ENCODE measurements at regions of chr1 and their contacts with region 1.

Region 1: GRCh38 chr1:89605692-89606091 is 27.2 kb upstream of the LRRC8C start:
- DNase-seq: no peak
- H3K4me3 Mint-ChIP-seq: peak overlapping the region; percentile 43
- H3K27ac Mint-ChIP-seq: peak overlapping the region; percentile 100
- H3K4me1 Mint-ChIP-seq: peaks cover 98% of the 10 kb centered on the region
- H3K27me3 Mint-ChIP-seq: no peaks in the 10 kb centered on the region

Region 2: GRCh38 chr1:89125913-89126580 is 479.6 kb before region 1 on chr1 and contains the start of gene GBP2:
- CTCF ChIA-PET with region 1: no interaction called
- POLR2A ChIA-PET with region 1: no interaction called
- intact Hi-C with region 1: loop called (anchors 2 kb)
- DNase-seq: peak; percentile 51
- H3K4me3 Mint-ChIP-seq: peak within 1 kb of the TSS; percentile 95
- H3K27ac Mint-ChIP-seq: peak within 1 kb of the TSS; percentile 99
- H3K4me1 Mint-ChIP-seq: peaks cover 54% of the 10 kb centered on the region
- H3K27me3 Mint-ChIP-seq: no peaks in the 10 kb centered on the region
- total RNA-seq, gene GBP2: 396 to 403 TPM

Region 3: GRCh38 chr1:89524369-89525168 is 81.1 kb before region 1 on chr1 and contains the start of gene LRRC8B:
- CTCF ChIA-PET with region 1: interaction called, 10 read pairs
- POLR2A ChIA-PET with region 1: interaction called, 10 read pairs
- intact Hi-C with region 1: loop called (anchors 1 kb)
- DNase-seq: peak; percentile 93
- H3K4me3 Mint-ChIP-seq: no peak within 1 kb of the TSS
- H3K27ac Mint-ChIP-seq: no peak within 1 kb of the TSS
- H3K4me1 Mint-ChIP-seq: peaks cover 31% of the 10 kb centered on the region
- H3K27me3 Mint-ChIP-seq: no peaks in the 10 kb centered on the region
- total RNA-seq, gene LRRC8B: 41.1 to 42.1 TPM

Region 4: DNA sequence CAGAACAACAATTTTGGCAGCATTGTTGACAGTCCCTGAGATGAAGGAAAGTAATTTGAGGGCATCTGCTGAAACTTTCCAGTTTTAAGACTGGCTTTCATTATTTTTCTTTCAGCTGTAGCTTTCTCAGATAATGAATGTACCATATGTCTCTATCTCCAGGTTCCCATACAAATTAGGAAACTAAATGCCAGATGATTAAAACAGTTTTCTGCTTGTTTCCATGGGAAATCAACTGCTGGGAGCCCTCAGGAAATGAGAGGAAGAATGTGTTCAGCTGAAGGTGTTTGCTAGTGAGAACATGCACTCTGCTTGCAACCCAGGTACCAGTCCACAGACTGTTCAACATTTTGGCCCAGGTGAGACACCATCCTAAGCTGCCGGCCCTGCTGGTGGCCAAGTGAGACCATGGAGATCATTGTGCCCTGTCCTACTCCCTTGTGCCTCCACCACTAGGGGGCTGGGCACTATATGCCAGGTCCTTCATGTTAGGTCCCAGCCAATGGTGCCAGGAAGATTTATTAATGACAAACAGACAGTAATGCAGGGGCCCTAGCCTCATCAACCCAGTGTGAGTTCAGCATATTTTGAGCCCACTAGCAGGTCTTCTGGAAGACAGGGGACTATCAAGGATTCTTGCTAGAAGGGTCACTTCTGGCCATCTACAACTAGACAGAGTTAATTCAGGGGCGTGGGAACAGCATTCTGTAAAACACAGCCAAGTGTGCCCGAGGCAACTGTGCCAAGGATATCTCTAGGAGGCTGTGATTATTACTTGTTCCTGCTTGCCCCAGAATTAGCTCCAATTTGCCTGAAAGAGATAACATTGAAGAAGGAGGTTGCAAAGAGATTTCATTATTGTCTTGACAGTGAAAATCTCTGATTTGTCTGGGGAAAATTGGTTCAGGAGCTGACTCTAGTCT is 10.2 kb after region 1 on chr1:
- CTCF ChIA-PET with region 1: interaction called, 35 read pairs
- POLR2A ChIA-PET with region 1: interaction called, 26 read pairs
- intact Hi-C with region 1: loop called (anchors 1 kb)
- DNase-seq: peak; percentile 33
- H3K4me3 Mint-ChIP-seq: no peak overlapping the region
- H3K27ac Mint-ChIP-seq: no peak overlapping the region
- H3K4me1 Mint-ChIP-seq: peaks cover 82% of the 10 kb centered on the region
- H3K27me3 Mint-ChIP-seq: no peaks in the 10 kb centered on the region

Region 5: GRCh38 chr1:89708751-89709375 is 103.2 kb after region 1 on chr1:
- CTCF ChIA-PET with region 1: no interaction called
- POLR2A ChIA-PET with region 1: no interaction called
- intact Hi-C with region 1: no loop called
- DNase-seq: no peak
- H3K4me3 Mint-ChIP-seq: no peak overlapping the region
- H3K27ac Mint-ChIP-seq: no peak overlapping the region
- H3K4me1 Mint-ChIP-seq: peaks cover 29% of the 10 kb centered on the region
- H3K27me3 Mint-ChIP-seq: no peaks in the 10 kb centered on the region

Region 6: DNA sequence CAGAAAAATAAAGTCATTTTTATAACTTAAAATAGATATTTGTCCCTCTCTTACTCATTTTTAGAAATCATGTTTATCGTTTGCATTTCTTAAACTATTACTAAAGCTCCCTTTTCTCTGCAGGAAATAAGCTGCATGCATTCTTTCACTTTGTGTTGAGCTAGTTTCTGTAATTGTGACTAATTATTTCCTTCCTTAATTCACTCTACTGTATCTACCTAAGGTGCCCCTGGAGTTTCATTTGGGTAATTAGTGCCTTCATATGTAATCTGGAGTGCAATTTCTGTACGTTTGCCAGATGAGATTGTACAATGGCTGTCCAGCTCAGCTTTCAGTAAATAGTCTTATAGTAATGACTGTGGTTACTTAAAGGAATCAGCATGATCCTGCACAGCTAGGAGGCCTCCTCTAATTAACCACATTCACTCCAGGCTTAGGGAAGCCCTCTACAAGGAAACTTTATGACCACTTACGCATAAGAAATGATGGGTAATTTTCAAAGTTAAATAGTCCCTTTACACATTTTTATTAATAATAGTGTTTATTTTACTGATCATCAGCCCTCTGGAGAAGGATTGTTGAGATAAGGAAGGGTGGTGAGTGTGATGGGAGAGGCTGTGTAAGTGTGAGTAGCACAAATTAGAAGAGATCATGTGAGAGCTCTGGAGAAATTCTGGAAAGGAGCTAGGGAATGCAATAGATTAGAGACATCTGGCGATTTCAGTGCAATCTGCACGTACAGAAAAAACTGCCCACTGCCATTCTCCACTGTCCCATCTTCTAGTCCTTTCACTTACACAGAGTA is 114.0 kb after region 1 on chr1:
- CTCF ChIA-PET with region 1: interaction called, 12 read pairs
- POLR2A ChIA-PET with region 1: interaction called, 27 read pairs
- intact Hi-C with region 1: loop called (anchors 1 kb)
- DNase-seq: no peak
- H3K4me3 Mint-ChIP-seq: no peak overlapping the region
- H3K27ac Mint-ChIP-seq: peak overlapping the region; percentile 97
- H3K4me1 Mint-ChIP-seq: peaks cover 92% of the 10 kb centered on the region
- H3K27me3 Mint-ChIP-seq: no peaks in the 10 kb centered on the region

Region 7: DNA sequence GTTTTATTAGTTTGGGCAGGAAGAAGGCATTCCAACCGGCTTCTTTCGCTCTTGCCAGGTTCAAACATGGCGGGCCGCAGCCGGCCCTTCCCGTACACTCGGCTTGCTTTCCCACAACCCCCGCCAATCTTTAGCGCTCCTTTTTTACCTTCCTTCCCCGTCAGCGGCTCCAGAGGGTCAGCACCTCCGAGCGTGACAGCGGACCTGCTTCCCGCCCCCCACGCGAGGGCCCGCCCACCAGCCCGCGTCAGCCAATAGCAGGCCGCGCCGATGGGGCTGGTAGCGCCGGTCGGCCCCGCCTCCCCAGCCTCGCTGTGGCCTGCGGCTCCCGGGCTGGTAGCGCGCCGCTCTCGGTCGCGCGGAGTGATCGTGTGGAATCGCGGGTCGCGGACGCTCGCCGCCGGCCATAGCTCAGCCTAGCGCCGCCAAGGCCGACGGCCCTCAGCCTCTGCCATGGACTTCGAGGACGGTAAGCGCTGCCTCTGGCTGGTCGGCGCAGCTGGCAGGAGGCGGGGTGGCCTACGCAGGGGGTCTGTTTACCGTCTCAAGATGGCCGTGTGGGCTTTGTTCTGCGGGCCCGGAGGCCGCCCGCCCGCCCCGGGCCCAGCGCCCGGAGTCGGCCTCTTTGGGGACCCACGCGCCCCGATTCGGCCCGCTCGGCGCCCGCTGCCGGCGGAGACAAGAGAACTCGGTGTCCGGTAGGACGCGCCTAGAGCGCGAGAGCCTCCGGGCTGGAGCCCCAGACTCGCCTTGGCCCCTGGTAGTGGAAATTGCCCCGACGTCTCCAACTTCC is 389.3 kb after region 1 on chr1 and contains the start of gene ZNF326:
- CTCF ChIA-PET with region 1: no interaction called
- POLR2A ChIA-PET with region 1: no interaction called
- intact Hi-C with region 1: loop called (anchors 10 kb)
- DNase-seq: peak; percentile 96
- H3K4me3 Mint-ChIP-seq: peak within 1 kb of the TSS; percentile 99
- H3K27ac Mint-ChIP-seq: peak within 1 kb of the TSS; percentile 89
- H3K4me1 Mint-ChIP-seq: peaks cover 39% of the 10 kb centered on the region
- H3K27me3 Mint-ChIP-seq: no peaks in the 10 kb centered on the region
- total RNA-seq, gene ZNF326: 17.2 to 17.3 TPM